ENCODE measurements at regions of chr20 and their contacts with region 1.

Region 1: GRCh38 chr20:31674895-31675827 is 37.4 kb downstream of the COX4I2 start:
- DNase-seq: peak; percentile 81
- ATAC-seq: peak; percentile 72
- H3K4me3 Mint-ChIP-seq: peak overlapping the region; percentile 91
- H3K27ac Mint-ChIP-seq: peak overlapping the region; percentile 100
- H3K4me1 Mint-ChIP-seq: peaks cover 79% of the 10 kb centered on the region
- H3K27me3 Mint-ChIP-seq: no peaks in the 10 kb centered on the region

Region 2: DNA sequence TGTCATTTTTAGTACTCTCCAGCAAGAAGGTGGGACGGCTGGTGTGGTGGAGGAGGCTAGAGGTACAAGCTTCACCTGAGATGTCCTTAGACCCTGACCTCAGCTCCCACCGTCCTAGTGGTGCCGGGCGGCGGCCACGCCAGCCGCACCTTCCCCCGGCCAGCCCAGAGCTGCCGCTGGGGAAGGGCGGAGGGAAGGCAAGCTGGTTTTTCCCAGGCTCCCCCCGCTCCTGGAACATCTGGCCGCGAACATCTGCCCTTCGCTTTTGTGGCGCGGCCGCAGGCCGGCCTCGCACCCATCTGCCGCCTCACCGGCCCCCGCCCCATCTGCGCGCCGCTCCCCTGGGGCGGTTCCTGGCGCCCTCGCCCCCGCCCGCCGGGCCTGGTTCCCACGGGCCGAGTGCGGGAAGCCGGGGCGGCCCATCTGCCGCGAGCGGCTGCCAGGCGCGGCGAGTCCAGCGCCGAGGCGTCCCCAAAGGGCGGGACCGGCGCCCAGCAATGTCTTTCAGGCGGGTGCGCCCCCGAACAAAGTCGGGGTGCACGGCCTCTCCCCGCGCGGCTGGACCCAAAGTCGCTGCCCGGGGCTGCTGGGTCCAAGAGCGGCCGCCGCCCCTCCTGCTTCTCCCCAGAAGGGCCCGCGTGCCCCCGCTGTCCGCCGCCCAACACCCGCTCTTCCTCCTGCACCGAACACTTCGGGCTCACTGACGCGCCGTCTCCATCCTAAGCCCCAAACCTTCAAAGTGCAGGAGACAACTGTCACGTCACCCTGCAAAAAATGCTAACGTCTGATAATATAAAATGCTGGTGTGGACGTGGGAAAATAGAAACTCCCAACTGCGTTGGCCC is 87.4 kb before region 1 on chr20:
- CTCF ChIA-PET with region 1: no interaction called
- POLR2A ChIA-PET with region 1: no interaction called
- intact Hi-C with region 1: no loop called
- DNase-seq: peak; percentile 34
- ATAC-seq: peak; percentile 58
- H3K4me3 Mint-ChIP-seq: peak overlapping the region; percentile 57
- H3K27ac Mint-ChIP-seq: peak overlapping the region; percentile 9
- H3K4me1 Mint-ChIP-seq: peaks cover 5% of the 10 kb centered on the region
- H3K27me3 Mint-ChIP-seq: peaks cover 20% of the 10 kb centered on the region

Region 3: GRCh38 chr20:31698803-31699718 is 23.9 kb after region 1 on chr20:
- CTCF ChIA-PET with region 1: interaction called, 4 read pairs
- POLR2A ChIA-PET with region 1: interaction called, 5 read pairs
- intact Hi-C with region 1: loop called in 1 of 2 experiments (anchors 2 kb)
- DNase-seq: peak; percentile 46
- ATAC-seq: peak; percentile 93
- H3K4me3 Mint-ChIP-seq: peak overlapping the region; percentile 26
- H3K27ac Mint-ChIP-seq: peak overlapping the region; percentile 89
- H3K4me1 Mint-ChIP-seq: peaks cover 68% of the 10 kb centered on the region
- H3K27me3 Mint-ChIP-seq: no peaks in the 10 kb centered on the region

Region 4: DNA sequence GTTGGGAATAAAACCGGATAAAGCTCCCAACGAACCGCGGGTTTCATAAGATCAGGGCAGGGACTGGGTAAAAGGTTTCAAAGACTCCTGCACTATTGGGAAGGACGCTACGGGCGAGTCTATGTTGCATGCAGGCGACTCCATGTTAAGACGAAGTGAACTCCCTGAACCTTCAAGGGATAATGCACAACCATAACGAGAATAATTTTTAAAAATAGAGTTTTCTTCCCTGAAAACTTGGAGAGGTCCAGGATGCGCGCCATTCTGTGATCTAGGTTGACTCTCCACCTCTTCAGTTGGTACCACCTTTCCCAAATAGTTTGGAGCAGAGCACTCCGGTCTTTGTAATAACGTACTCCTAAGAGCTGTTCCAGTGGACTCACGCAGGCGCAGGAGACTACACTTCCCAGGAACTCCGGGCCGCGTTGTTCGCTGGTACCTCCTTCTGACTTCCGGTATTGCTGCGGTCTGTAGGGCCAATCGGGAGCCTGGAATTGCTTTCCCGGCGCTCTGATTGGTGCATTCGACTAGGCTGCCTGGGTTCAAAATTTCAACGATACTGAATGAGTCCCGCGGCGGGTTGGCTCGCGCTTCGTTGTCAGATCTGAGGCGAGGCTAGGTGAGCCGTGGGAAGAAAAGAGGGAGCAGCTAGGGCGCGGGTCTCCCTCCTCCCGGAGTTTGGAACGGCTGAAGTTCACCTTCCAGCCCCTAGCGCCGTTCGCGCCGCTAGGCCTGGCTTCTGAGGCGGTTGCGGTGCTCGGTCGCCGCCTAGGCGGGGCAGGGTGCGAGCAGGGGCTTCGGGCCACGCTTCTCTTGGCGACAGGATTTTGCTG is 63.8 kb after region 1 on chr20 and contains the start of gene TPX2:
- CTCF ChIA-PET with region 1: no interaction called
- POLR2A ChIA-PET with region 1: no interaction called
- intact Hi-C with region 1: loop called in 1 of 2 experiments (anchors 1 kb)
- DNase-seq: peak; percentile 92
- ATAC-seq: peak; percentile 97
- H3K4me3 Mint-ChIP-seq: no peak within 1 kb of the TSS
- H3K27ac Mint-ChIP-seq: no peak within 1 kb of the TSS
- H3K4me1 Mint-ChIP-seq: peaks cover 2% of the 10 kb centered on the region
- H3K27me3 Mint-ChIP-seq: no peaks in the 10 kb centered on the region
- total RNA-seq, gene TPX2: 137 to 179 TPM

Region 5: GRCh38 chr20:31861346-31862156 is 186.4 kb after region 1 on chr20:
- CTCF ChIA-PET with region 1: no interaction called
- POLR2A ChIA-PET with region 1: no interaction called
- intact Hi-C with region 1: no loop called
- DNase-seq: peak; percentile 84
- ATAC-seq: peak; percentile 97
- H3K4me3 Mint-ChIP-seq: peak overlapping the region; percentile 24
- H3K27ac Mint-ChIP-seq: no peak overlapping the region
- H3K4me1 Mint-ChIP-seq: peaks cover 8% of the 10 kb centered on the region
- H3K27me3 Mint-ChIP-seq: peaks cover 26% of the 10 kb centered on the region

Region 6: GRCh38 chr20:32034581-32035425 is 359.6 kb after region 1 on chr20:
- CTCF ChIA-PET with region 1: no interaction called
- POLR2A ChIA-PET with region 1: no interaction called
- intact Hi-C with region 1: no loop called
- DNase-seq: no peak
- ATAC-seq: no peak
- H3K4me3 Mint-ChIP-seq: no peak overlapping the region
- H3K27ac Mint-ChIP-seq: no peak overlapping the region
- H3K4me1 Mint-ChIP-seq: no peaks in the 10 kb centered on the region
- H3K27me3 Mint-ChIP-seq: peaks cover 29% of the 10 kb centered on the region